Uterus (tissue), 4 donors: ENCODE measurements at regions of chr22 and their contacts with region 1.

Region 1: DNA sequence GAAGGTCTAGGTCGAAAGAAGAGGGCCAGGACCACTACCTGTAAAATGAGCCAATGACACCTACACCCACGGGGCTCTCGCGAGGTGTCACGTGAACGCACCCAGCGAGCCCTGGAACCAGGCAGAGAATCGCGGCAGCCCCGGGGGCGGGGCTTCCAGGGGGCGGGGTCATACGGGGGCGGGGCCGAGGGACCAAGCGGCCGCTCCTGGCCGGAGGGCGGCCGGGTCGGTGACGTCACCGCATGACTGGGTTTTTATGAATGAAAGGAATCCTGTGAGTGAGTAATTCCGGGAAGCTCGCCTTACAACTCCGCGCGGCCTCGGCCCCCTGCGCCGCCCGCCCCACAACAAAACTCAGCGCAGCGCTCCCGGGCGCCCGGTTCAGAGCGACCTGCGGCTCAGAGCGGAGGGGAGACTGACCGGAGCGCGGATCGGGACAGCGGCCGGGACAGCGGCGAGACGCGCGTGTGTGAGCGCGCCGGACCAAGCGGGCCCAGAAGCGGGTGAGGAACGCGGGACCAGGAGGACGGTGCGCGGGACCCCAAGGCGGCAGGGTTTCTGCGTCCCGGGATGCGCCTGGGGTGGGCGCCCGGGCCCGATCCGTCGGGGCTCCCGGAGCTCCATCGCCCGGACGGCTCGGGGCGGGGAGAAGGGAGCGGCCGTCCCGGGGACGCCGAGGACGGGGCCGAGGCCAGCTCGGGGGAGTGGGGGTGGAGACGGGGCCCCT is at the start of gene MAFF:
- DNase-seq: peak; percentile 98
- H3K4me3 ChIP-seq: peak within 1 kb of the TSS; percentile 77 to 80
- H3K27ac ChIP-seq: peak within 1 kb of the TSS; percentile 99 to 100
- H3K4me1 ChIP-seq: peaks cover 6 to 7% of the 10 kb centered on the region in 2 donors
- H3K27me3 ChIP-seq: no peaks in the 10 kb centered on the region
- CTCF ChIP-seq: no peak
- POLR2A ChIP-seq: peak; percentile 98
- total RNA-seq, gene MAFF: 10.1 to 180 (median 44.0) TPM

Region 2: GRCh38 chr22:38088629-38089473 is 113.0 kb before region 1 on chr22:
- intact Hi-C with region 1: no loop called
- DNase-seq: no peak
- H3K4me3 ChIP-seq: peak overlapping the region in 1 of 2 donors; percentile 3
- H3K27ac ChIP-seq: no peak overlapping the region
- H3K4me1 ChIP-seq: peaks cover 0 to 10% of the 10 kb centered on the region in 2 donors
- H3K27me3 ChIP-seq: peaks cover 0 to 11% of the 10 kb centered on the region in 2 donors
- CTCF ChIP-seq: no peak
- POLR2A ChIP-seq: no peak

Region 3: GRCh38 chr22:38262051-38262795 is 60.4 kb after region 1 on chr22:
- intact Hi-C with region 1: loop called (anchors 10 kb)
- DNase-seq: peak; percentile 57 to 70
- H3K4me3 ChIP-seq: no peak overlapping the region
- H3K27ac ChIP-seq: peak overlapping the region; percentile 80 to 88
- H3K4me1 ChIP-seq: peaks cover 5 to 21% of the 10 kb centered on the region in 2 donors
- H3K27me3 ChIP-seq: no peaks in the 10 kb centered on the region
- CTCF ChIP-seq: peak; percentile 44 to 55 (median 50)
- POLR2A ChIP-seq: no peak

Region 4: DNA sequence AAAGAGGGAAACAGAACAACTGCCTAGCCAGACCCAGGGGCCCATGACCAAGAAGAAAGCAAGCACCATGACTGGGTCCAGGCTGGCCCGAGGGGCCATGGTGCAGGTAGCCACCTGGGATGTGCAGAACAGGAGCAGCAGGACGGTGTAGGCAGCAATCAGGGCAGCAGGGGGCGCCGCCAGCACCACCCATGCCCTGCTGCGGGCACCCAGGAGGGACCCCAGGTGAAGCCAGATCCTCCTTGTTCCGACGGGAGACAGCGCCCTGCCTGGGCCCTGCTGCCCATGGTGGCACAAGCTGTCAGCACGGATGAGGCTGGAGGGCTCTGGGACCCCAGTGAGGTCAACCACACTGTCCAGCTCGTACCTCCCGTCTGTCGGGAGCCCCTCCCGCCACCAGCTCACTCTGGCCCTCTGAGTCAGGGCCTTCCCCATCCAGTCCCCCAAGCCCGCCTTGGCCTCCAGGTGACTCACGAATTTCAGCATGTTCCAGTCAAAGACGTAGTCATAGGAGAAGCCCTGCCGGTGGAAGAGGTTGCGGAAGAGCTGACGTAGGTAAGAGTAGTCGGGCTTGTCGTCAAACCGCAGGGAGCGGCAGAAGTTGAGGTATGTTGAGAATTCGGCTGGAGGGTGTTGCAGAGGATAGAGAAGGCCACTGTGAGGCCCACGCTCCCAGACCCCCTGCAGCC is 96.6 kb after region 1 on chr22:
- intact Hi-C with region 1: no loop called
- DNase-seq: no peak
- H3K4me3 ChIP-seq: no peak overlapping the region
- H3K27ac ChIP-seq: no peak overlapping the region
- H3K4me1 ChIP-seq: peaks cover 2 to 3% of the 10 kb centered on the region in 2 donors
- H3K27me3 ChIP-seq: no peaks in the 10 kb centered on the region
- CTCF ChIP-seq: peak in 2 of 4 experiments; percentile 9 to 11
- POLR2A ChIP-seq: no peak